Activated CD4-positive, alpha-beta T cell treated with anti-CD3 and anti-CD28 coated beads, Interleukin-2, amount 10 ng/mL, durations not matched to agents 24 days and 14 days (primary cell): ENCODE measurements at regions of chr19 and their contacts with region 1.

Region 1: DNA sequence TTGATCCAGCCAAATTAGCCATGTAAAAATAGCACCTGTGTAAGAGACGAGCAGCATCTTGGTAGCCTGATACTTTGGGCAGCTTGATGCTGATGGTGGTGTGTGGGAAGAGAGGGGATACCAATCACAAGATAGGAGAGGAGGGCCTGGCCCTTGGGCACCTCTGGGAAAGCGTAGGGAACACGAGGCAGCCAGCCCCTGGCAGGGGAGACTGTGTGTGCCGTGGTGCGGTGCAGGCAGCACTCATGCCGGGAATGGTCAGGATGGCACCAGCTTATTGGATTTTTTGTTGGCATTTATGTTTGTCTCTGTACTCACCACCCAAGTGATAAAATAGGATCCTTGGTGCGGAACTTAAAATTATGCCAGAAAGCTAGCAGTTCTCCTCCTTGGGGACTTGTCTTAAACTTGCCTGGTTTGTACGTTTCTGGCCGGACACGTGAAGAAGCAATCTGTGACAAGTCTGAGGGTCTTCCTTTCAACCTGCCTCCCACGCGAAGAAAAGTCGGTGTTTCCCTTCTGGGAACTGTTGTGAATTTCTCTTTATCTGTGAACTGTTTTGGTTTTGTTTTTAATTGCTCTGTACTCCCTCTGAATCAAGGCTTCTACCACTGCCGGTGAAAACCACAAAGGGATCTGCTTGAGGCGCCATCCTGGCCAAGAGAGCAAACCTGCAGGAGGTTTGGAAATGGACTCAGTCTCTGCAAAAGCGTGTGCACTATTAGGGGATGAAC is 10.1 kb downstream of the SIGLEC8 start:
- DNase-seq: peak; percentile 80
- H3K4me3 Mint-ChIP-seq: peak overlapping the region; percentile 71
- H3K27ac Mint-ChIP-seq: peak overlapping the region; percentile 89
- H3K4me1 Mint-ChIP-seq: peaks cover 37% of the 10 kb centered on the region
- H3K27me3 Mint-ChIP-seq: peaks cover 11% of the 10 kb centered on the region

Region 2: DNA sequence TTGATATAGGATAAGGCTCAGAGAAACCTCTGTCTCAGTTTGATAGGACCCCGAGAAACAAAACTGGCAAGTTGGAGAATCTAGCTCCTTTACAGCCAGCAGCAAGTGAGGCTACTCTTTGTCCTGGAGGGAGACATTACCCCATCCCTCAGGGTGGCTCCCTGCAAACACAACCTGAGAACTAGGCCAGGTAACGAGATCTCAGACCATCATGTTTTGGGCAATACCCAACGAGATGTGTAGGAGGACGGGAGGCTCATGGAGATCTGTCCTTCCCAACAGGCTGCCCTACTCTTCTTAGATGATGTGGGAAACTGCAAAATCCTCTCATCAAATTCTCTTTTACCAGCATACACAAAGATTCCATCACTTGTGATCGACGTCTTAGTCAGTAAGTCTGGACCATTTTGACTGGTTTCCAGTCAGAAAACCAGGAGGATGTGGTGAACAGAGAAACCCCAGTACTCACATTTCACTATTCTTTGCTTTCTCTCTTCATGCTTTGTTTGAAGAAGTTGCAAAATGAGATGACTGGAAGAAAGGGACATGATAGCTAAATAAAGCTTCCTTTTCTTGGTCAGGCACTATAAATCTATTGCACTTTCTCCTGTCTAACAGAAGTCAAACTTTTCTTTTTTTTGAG is 334.0 kb before region 1 on chr19:
- intact Hi-C with region 1: loop called (anchors 2 kb)
- DNase-seq: peak; percentile 79
- H3K4me3 Mint-ChIP-seq: peak overlapping the region; percentile 34
- H3K27ac Mint-ChIP-seq: peak overlapping the region; percentile 85
- H3K4me1 Mint-ChIP-seq: peaks cover 32% of the 10 kb centered on the region
- H3K27me3 Mint-ChIP-seq: peaks cover 7% of the 10 kb centered on the region

Region 3: DNA sequence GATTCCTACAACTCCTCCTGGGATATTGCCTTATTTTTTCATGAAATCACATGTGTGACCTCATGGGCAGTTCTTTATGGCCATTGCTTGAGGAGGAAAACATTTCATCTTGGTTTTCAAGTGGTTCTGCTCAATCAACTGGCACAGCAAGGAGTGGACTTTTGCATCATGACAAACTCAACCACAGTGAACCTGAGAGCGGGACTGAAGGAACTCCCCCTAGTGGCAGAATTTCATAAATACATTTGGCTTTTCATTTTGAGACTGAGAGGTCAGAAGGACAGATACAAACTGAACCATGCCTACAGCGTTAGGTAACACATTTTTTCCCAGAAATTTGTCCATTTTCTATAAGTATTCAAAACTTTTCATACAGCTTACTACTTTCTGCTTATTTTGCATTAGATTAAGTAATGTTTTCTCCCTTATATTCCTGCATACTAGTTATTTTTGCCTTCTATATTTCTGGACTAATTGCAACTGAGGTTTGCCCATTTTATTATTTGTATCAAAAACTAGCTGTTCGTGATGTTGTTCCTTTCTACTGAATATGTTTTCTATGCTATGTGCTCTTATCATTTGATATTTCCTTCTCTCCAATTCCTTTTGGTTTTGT is 66.8 kb after region 1 on chr19:
- intact Hi-C with region 1: loop called (anchors 2 kb)
- DNase-seq: peak; percentile 79
- H3K4me3 Mint-ChIP-seq: no peak overlapping the region
- H3K27ac Mint-ChIP-seq: no peak overlapping the region
- H3K4me1 Mint-ChIP-seq: peaks cover 14% of the 10 kb centered on the region
- H3K27me3 Mint-ChIP-seq: peaks cover 27% of the 10 kb centered on the region